ENCODE measurements at regions of chr5 and their contacts with region 1.

Region 1: GRCh38 chr5:132753135-132753987 is 6.1 kb downstream of the CCNI2 start:
- DNase-seq: no peak
- H3K4me3 ChIP-seq: no peak overlapping the region
- H3K27ac ChIP-seq: no peak overlapping the region
- H3K4me1 ChIP-seq: no peaks in the 10 kb centered on the region
- H3K27me3 ChIP-seq: no peaks in the 10 kb centered on the region
- CTCF ChIP-seq: peak in 1 of 2 donors; percentile 6
- POLR2A ChIP-seq: no peak

Region 2: DNA sequence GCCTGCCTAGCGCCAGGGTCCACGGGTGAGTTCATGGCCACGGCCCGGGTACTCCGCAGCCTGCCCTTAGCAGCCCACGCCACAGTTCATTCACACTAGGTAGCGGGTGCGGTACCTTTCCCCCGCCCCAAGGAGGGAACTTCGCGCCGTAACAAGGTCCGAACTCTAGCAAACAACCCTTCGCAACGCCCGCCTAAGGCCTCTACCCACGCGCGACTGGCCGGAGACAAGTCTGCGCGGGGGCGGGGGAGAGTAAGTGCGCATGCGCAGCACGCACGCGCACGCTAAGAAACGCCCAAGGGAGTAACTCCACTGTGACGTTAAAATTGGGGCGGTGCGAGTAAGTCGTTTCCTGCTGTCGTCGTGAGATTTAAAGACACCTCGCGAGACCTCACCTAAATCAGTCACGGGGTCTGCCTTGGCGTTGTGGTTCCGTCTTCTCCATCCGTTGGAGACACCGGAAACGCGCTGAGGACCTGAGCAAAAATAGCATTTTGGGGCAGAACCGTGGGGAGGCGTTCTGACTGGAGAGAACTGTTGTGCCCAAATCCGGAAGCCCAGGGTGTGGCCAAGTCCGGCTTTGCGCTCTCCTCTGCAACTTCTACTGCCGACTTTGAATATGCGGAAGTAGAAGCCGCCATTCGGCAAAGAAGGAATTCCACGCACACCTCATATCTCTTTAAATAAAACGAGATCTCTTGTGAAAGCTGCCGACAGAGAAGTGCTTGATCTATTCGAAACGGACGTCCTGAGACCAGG is 1118.2 kb before region 1 on chr5 and contains the start of gene RAPGEF6:
- CTCF ChIA-PET with region 1: no interaction called
- POLR2A ChIA-PET with region 1: no interaction called
- dilution Hi-C with region 1: no loop called
- intact Hi-C with region 1: no loop called
- DNase-seq: peak; percentile 99
- H3K4me3 ChIP-seq: peak within 1 kb of the TSS; percentile 52 to 82 (median 56)
- H3K27ac ChIP-seq: peak within 1 kb of the TSS; percentile 95
- H3K4me1 ChIP-seq: peaks cover 16% of the 10 kb centered on the region
- H3K27me3 ChIP-seq: no peaks in the 10 kb centered on the region
- CTCF ChIP-seq: peak in 1 of 2 donors; percentile 3
- POLR2A ChIP-seq: peak; percentile 76
- total RNA-seq, gene RAPGEF6: 13.9 and 17.5 TPM in 2 replicates

Region 3: GRCh38 chr5:132044207-132044606 is 709.2 kb before region 1 on chr5:
- CTCF ChIA-PET with region 1: no interaction called
- POLR2A ChIA-PET with region 1: no interaction called
- dilution Hi-C with region 1: no loop called
- intact Hi-C with region 1: no loop called
- DNase-seq: no peak
- H3K4me3 ChIP-seq: no peak overlapping the region
- H3K27ac ChIP-seq: no peak overlapping the region
- H3K4me1 ChIP-seq: no peaks in the 10 kb centered on the region
- H3K27me3 ChIP-seq: peaks cover 2% of the 10 kb centered on the region in 2 experiments
- CTCF ChIP-seq: no peak
- POLR2A ChIP-seq: no peak

Region 4: DNA sequence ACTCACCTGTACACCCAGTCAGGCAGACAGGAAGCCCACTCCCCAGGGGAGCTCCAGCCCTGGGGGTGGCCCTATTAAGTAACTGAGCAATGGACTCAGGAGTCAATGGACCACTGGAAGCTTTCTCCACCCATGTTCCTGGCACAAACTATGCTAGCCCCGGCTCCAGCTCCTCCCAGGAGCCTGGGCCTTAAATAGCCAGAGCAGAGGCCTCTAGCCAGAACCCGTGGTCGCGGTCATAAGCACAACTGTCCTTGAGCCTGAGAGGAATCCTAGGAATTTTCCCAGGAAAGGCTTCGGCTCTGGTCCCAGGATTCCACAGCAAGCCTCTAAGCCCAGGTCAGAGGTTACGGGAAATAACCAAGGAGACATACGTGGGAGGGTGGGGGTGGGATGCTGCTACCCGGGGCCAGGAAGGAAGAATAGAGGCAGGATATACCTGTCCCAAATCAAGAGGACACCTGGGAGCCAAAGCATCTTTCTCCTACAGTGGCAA is 18.2 kb after region 1 on chr5:
- CTCF ChIA-PET with region 1: interaction called, 17 read pairs
- POLR2A ChIA-PET with region 1: no interaction called
- dilution Hi-C with region 1: no loop called
- intact Hi-C with region 1: no loop called
- DNase-seq: peak; percentile 19
- H3K4me3 ChIP-seq: no peak overlapping the region
- H3K27ac ChIP-seq: peak overlapping the region; percentile 55
- H3K4me1 ChIP-seq: peaks cover 33% of the 10 kb centered on the region
- H3K27me3 ChIP-seq: no peaks in the 10 kb centered on the region
- CTCF ChIP-seq: no peak
- POLR2A ChIP-seq: no peak

Region 5: GRCh38 chr5:132777209-132778069 is 24.1 kb after region 1 on chr5 and contains the start of gene SEPTIN8:
- CTCF ChIA-PET with region 1: interaction called, 17 read pairs
- POLR2A ChIA-PET with region 1: no interaction called
- dilution Hi-C with region 1: no loop called
- intact Hi-C with region 1: no loop called
- DNase-seq: peak; percentile 33
- H3K4me3 ChIP-seq: peak within 1 kb of the TSS; percentile 52 to 75 (median 62)
- H3K27ac ChIP-seq: peak within 1 kb of the TSS; percentile 35
- H3K4me1 ChIP-seq: peaks cover 26% of the 10 kb centered on the region
- H3K27me3 ChIP-seq: no peaks in the 10 kb centered on the region
- CTCF ChIP-seq: no peak
- POLR2A ChIP-seq: no peak
- total RNA-seq, gene SEPTIN8: 77.2 and 82.1 TPM in 2 replicates

Region 6: GRCh38 chr5:132797651-132798050 is 44.3 kb after region 1 on chr5:
- CTCF ChIA-PET with region 1: interaction called, 39 read pairs
- POLR2A ChIA-PET with region 1: no interaction called
- dilution Hi-C with region 1: no loop called
- intact Hi-C with region 1: no loop called
- DNase-seq: no peak
- H3K4me3 ChIP-seq: no peak overlapping the region
- H3K27ac ChIP-seq: no peak overlapping the region
- H3K4me1 ChIP-seq: no peaks in the 10 kb centered on the region
- H3K27me3 ChIP-seq: peaks cover 10 to 22% of the 10 kb centered on the region in 2 experiments
- CTCF ChIP-seq: no peak
- POLR2A ChIP-seq: no peak

Region 7: GRCh38 chr5:132807163-132807838 is 53.9 kb after region 1 on chr5:
- CTCF ChIA-PET with region 1: interaction called, 39 read pairs
- POLR2A ChIA-PET with region 1: no interaction called
- dilution Hi-C with region 1: no loop called
- intact Hi-C with region 1: no loop called
- DNase-seq: no peak
- H3K4me3 ChIP-seq: no peak overlapping the region
- H3K27ac ChIP-seq: no peak overlapping the region
- H3K4me1 ChIP-seq: no peaks in the 10 kb centered on the region
- H3K27me3 ChIP-seq: peaks cover 18 to 25% of the 10 kb centered on the region in 2 experiments
- CTCF ChIP-seq: no peak
- POLR2A ChIP-seq: no peak

Region 8: GRCh38 chr5:132813599-132814502 is 60.5 kb after region 1 on chr5:
- CTCF ChIA-PET with region 1: interaction called, 179 read pairs
- POLR2A ChIA-PET with region 1: no interaction called
- dilution Hi-C with region 1: no loop called
- intact Hi-C with region 1: no loop called
- DNase-seq: peak; percentile 21
- H3K4me3 ChIP-seq: peak overlapping the region in 2 of 3 experiments; percentile 9 to 11
- H3K27ac ChIP-seq: no peak overlapping the region
- H3K4me1 ChIP-seq: no peaks in the 10 kb centered on the region
- H3K27me3 ChIP-seq: peaks cover 19 to 33% of the 10 kb centered on the region in 2 experiments
- CTCF ChIP-seq: no peak
- POLR2A ChIP-seq: no peak

Measured in endothelial cell of umbilical vein (primary cell).